CD4-positive, alpha-beta memory T cell (primary cell): ENCODE measurements at regions of chr10 and their contacts with region 1.

Region 1: DNA sequence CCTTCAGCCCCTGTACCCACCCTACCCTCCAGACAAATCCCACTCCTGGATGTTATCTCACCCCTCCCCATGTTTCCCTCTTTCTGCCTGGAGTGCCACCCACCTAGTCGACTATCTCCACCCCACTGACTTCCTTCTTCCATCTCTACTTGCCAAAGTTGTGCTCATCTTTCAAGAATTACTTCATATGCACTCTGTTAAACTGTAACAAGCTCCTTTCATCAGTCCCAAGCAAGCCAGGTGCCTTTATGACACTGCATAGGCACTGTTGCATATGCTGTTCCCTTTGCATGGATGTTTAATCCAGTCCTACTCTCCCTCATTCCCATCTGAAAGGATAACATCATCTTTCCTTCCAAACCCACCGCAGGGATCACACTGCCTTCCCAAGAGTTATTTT is 8.9 kb upstream of the CDK1 start:
- DNase-seq: no peak
- H3K4me3 ChIP-seq: no peak overlapping the region
- H3K4me3 Mint-ChIP-seq: no peak overlapping the region
- H3K27ac ChIP-seq: no peak overlapping the region
- H3K27ac Mint-ChIP-seq: peak overlapping the region in 1 of 7 donors; percentile 5
- H3K4me1 ChIP-seq: peaks cover 10% of the 10 kb centered on the region
- H3K4me1 Mint-ChIP-seq: peaks cover 6 to 11% (median 8%) of the 10 kb centered on the region in 4 donors
- H3K27me3 ChIP-seq: no peaks in the 10 kb centered on the region
- H3K27me3 Mint-ChIP-seq: peaks cover 0 to 2% of the 10 kb centered on the region in 2 donors

Region 2: GRCh38 chr10:60099998-60100747 is 669.2 kb before region 1 on chr10:
- CTCF ChIA-PET with region 1: interaction called, 6 read pairs
- POLR2A ChIA-PET with region 1: no interaction called
- intact Hi-C with region 1: loop called (anchors 1 kb)
- DNase-seq: peak in 4 of 5 donors; percentile 23 to 38 (median 34)
- H3K4me3 ChIP-seq: no peak overlapping the region
- H3K4me3 Mint-ChIP-seq: no peak overlapping the region
- H3K27ac ChIP-seq: no peak overlapping the region
- H3K27ac Mint-ChIP-seq: peak overlapping the region in 1 of 7 donors; percentile 1
- H3K4me1 ChIP-seq: no peaks in the 10 kb centered on the region
- H3K4me1 Mint-ChIP-seq: peaks cover 0 to 4% (median under 1%) of the 10 kb centered on the region in 4 donors
- H3K27me3 ChIP-seq: no peaks in the 10 kb centered on the region
- H3K27me3 Mint-ChIP-seq: no peaks in the 10 kb centered on the region

Region 3: GRCh38 chr10:60444494-60445064 is 324.8 kb before region 1 on chr10:
- CTCF ChIA-PET with region 1: interaction called, 62 read pairs
- POLR2A ChIA-PET with region 1: no interaction called
- intact Hi-C with region 1: loop called (anchors 1 kb)
- DNase-seq: no peak
- H3K4me3 ChIP-seq: no peak overlapping the region
- H3K4me3 Mint-ChIP-seq: no peak overlapping the region
- H3K27ac ChIP-seq: no peak overlapping the region
- H3K27ac Mint-ChIP-seq: no peak overlapping the region
- H3K4me1 ChIP-seq: peaks cover 12% of the 10 kb centered on the region
- H3K4me1 Mint-ChIP-seq: peaks cover 18 to 25% (median 19%) of the 10 kb centered on the region in 4 donors
- H3K27me3 ChIP-seq: no peaks in the 10 kb centered on the region
- H3K27me3 Mint-ChIP-seq: no peaks in the 10 kb centered on the region

Region 4: DNA sequence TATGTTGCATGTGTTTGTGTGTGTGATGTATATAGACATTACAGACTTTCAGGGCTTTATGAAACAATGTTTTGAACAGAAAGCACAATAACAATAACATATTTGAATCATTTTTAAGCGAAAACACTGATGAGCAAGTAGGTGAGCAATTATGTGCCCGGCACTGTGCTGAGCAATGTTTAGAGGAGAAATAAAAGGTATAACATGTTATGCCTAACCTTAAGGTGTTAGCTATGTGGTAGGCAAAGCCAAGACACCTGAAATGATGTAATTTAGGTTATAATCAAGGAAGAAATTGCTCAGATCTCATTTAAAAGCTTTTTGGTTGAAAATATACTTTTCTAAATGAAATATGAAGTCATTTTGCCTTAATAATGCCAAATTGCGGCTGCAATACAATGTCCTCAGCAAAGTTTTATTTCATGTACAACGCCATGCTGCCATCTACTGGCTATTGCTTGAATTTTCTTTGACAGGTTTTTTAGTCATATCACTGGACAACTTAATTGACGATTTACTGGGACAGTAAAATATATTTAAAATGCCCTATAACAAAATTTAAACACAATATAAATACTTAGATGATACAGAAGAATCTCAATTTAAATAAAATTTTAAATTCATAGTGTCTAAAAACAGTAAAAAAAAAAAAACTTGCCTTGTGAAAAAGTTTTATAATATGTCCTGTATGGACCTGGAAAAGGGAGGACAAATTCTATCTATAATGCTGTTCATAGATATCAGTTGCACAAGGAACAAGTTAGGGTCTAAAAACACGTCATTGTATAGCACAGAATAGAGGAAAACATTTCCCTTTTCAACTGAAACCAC is 122.2 kb before region 1 on chr10:
- CTCF ChIA-PET with region 1: interaction called, 40 read pairs
- POLR2A ChIA-PET with region 1: interaction called, 4 read pairs
- intact Hi-C with region 1: loop called (anchors 1 kb)
- DNase-seq: peak; percentile 45 to 59 (median 51)
- H3K4me3 ChIP-seq: no peak overlapping the region
- H3K4me3 Mint-ChIP-seq: no peak overlapping the region
- H3K27ac ChIP-seq: no peak overlapping the region
- H3K27ac Mint-ChIP-seq: peak overlapping the region in 3 of 7 donors; percentile 7 to 34 (median 14)
- H3K4me1 ChIP-seq: peaks cover 24% of the 10 kb centered on the region
- H3K4me1 Mint-ChIP-seq: peaks cover 34 to 46% (median 35%) of the 10 kb centered on the region in 4 donors
- H3K27me3 ChIP-seq: no peaks in the 10 kb centered on the region
- H3K27me3 Mint-ChIP-seq: no peaks in the 10 kb centered on the region

Region 5: GRCh38 chr10:60704480-60704879 is 64.9 kb before region 1 on chr10:
- CTCF ChIA-PET with region 1: no interaction called
- POLR2A ChIA-PET with region 1: no interaction called
- intact Hi-C with region 1: no loop called
- DNase-seq: no peak
- H3K4me3 ChIP-seq: no peak overlapping the region
- H3K4me3 Mint-ChIP-seq: peak overlapping the region in 2 of 8 donors; percentile 3 to 49
- H3K27ac ChIP-seq: no peak overlapping the region
- H3K27ac Mint-ChIP-seq: peak overlapping the region in 4 of 7 donors; percentile 9 to 89 (median 51)
- H3K4me1 ChIP-seq: peaks cover 44% of the 10 kb centered on the region
- H3K4me1 Mint-ChIP-seq: peaks cover 46 to 65% (median 50%) of the 10 kb centered on the region in 4 donors
- H3K27me3 ChIP-seq: no peaks in the 10 kb centered on the region
- H3K27me3 Mint-ChIP-seq: no peaks in the 10 kb centered on the region

Region 6: GRCh38 chr10:60733189-60733822 is 36.1 kb before region 1 on chr10:
- CTCF ChIA-PET with region 1: interaction called, 15 read pairs
- POLR2A ChIA-PET with region 1: no interaction called
- intact Hi-C with region 1: loop called (anchors 2 kb)
- DNase-seq: peak; percentile 50 to 67 (median 55)
- H3K4me3 ChIP-seq: peak overlapping the region in 1 of 2 donors; percentile 70
- H3K4me3 Mint-ChIP-seq: peak overlapping the region; percentile 65 to 100 (median 84)
- H3K27ac ChIP-seq: peak overlapping the region; percentile 72
- H3K27ac Mint-ChIP-seq: peak overlapping the region in 6 of 7 donors; percentile 72 to 99 (median 88)
- H3K4me1 ChIP-seq: peaks cover 47% of the 10 kb centered on the region
- H3K4me1 Mint-ChIP-seq: peaks cover 24 to 41% (median 35%) of the 10 kb centered on the region in 4 donors
- H3K27me3 ChIP-seq: no peaks in the 10 kb centered on the region
- H3K27me3 Mint-ChIP-seq: no peaks in the 10 kb centered on the region